ENCODE measurements at regions of chr1 and their contacts with region 1.

Region 1: GRCh38 chr1:209860293-209860881 is 32.6 kb downstream of the UTP25 start:
- DNase-seq: peak; percentile 71 to 78
- ATAC-seq: peak; percentile 58 to 81 (median 74)
- H3K4me3 ChIP-seq: no peak overlapping the region
- H3K27ac ChIP-seq: no peak overlapping the region
- H3K4me1 ChIP-seq: no peaks in the 10 kb centered on the region
- H3K27me3 ChIP-seq: peaks cover 0 to 7% (median 0%) of the 10 kb centered on the region in 3 donors
- CTCF ChIP-seq: peak; percentile 87

Region 2: DNA sequence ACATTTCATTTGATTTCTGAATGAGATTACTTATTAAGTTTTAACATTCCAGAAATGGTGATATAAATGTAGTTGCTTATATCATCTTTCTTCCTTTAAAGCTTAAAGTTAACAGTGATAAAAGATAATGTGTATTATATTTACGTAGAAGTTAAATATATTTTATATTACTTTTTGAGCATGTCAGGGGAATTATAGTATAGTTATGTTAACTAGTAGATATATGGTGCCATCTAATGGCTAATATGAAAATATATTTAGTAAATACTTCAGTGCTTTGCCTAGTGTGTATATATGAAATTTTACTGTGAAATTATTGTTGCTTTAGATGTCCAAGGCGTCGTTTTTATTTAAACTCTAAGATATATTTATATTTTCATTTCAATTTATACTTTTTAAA is 129.1 kb after region 1 on chr1:
- intact Hi-C with region 1: loop called in 1 of 2 experiments (anchors 2 kb)
- DNase-seq: no peak
- ATAC-seq: no peak
- H3K4me3 ChIP-seq: no peak overlapping the region
- H3K27ac ChIP-seq: no peak overlapping the region
- H3K4me1 ChIP-seq: no peaks in the 10 kb centered on the region
- H3K27me3 ChIP-seq: no peaks in the 10 kb centered on the region
- CTCF ChIP-seq: peak; percentile 32

Region 3: DNA sequence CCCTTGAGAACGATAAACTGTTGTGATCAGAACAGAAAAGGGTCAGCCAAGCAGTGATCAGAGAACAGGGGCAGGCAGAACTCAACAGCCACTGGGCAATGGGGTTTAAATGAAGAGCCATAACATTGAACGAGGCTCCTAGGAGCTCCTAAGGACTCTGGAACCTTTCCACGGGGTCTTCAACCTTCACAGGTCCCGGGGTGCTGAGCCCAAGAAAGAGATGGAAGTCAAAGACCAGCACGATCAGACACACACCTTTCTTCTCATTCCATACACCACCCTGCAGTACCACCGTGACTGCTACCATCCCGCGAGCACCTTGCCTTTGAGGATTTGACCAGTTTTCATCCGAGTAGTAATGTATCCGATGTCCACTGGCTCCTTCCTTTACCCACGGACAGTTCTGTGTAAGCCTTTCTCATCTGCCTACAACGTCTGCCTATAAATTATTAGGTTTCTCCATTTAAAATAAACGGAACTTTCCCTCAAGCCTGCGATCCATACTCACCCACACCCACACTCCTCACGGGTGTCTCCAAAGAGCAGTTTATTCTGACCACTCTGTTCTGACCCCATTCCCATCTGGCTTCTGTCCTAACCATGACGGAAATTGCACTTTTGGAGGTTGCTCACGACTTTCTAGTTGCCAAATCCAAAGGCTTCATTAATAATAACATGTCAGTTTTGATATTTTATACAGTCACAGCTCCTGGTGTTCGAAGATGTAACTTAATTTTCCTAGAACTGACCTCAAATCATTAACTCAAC is 451.5 kb after region 1 on chr1:
- intact Hi-C with region 1: loop called (anchors 5 kb)
- DNase-seq: no peak
- ATAC-seq: peak in 2 of 4 donors; percentile 35 to 63
- H3K4me3 ChIP-seq: peak overlapping the region; percentile 42
- H3K27ac ChIP-seq: peak overlapping the region; percentile 41
- H3K4me1 ChIP-seq: no peaks in the 10 kb centered on the region
- H3K27me3 ChIP-seq: no peaks in the 10 kb centered on the region
- CTCF ChIP-seq: no peak

Measured in psoas muscle (tissue), 8 donors.